Endothelial cell of umbilical vein (primary cell): ENCODE measurements at regions of chr1 and their contacts with region 1.

Region 1: GRCh38 chr1:54052934-54053744 is at the starts of genes TCEANC2 and TMEM59:
- DNase-seq: peak; percentile 99
- H3K4me3 ChIP-seq: peak within 1 kb of the TSS; percentile 81 to 96 (median 91)
- H3K27ac ChIP-seq: peak within 1 kb of the TSS; percentile 64
- H3K4me1 ChIP-seq: peaks cover 11% of the 10 kb centered on the region
- H3K27me3 ChIP-seq: no peaks in the 10 kb centered on the region
- CTCF ChIP-seq: no peak
- POLR2A ChIP-seq: peak; percentile 42
- total RNA-seq, gene TCEANC2: 5.1 and 6.1 TPM in 2 replicates
- total RNA-seq, gene TMEM59: 196 and 198 TPM in 2 replicates

Region 2: GRCh38 chr1:53837924-53838652 is 215.1 kb before region 1 on chr1 and contains the start of gene NDC1:
- CTCF ChIA-PET with region 1: no interaction called
- POLR2A ChIA-PET with region 1: no interaction called
- dilution Hi-C with region 1: no loop called
- intact Hi-C with region 1: loop called (anchors 1 kb)
- DNase-seq: peak; percentile 96
- H3K4me3 ChIP-seq: peak within 1 kb of the TSS; percentile 86 to 97 (median 91)
- H3K27ac ChIP-seq: peak within 1 kb of the TSS; percentile 82
- H3K4me1 ChIP-seq: peaks cover 5% of the 10 kb centered on the region
- H3K27me3 ChIP-seq: no peaks in the 10 kb centered on the region
- CTCF ChIP-seq: peak in 1 of 2 donors; percentile 26
- POLR2A ChIP-seq: no peak
- total RNA-seq, gene NDC1: 29.2 and 30.2 TPM in 2 replicates

Region 3: GRCh38 chr1:53945433-53946251 is 107.5 kb before region 1 on chr1 and contains the start of gene IFT25:
- CTCF ChIA-PET with region 1: no interaction called
- POLR2A ChIA-PET with region 1: no interaction called
- dilution Hi-C with region 1: no loop called
- intact Hi-C with region 1: loop called (anchors 1 kb)
- DNase-seq: peak; percentile 95
- H3K4me3 ChIP-seq: peak within 1 kb of the TSS; percentile 88 to 95 (median 91)
- H3K27ac ChIP-seq: peak within 1 kb of the TSS; percentile 43
- H3K4me1 ChIP-seq: peaks cover 20% of the 10 kb centered on the region
- H3K27me3 ChIP-seq: no peaks in the 10 kb centered on the region
- CTCF ChIP-seq: no peak
- POLR2A ChIP-seq: peak; percentile 77
- total RNA-seq, gene IFT25: 31.4 and 34.0 TPM in 2 replicates

Region 4: GRCh38 chr1:54199765-54200518 is 146.8 kb after region 1 on chr1 and contains the starts of genes CYB5RL and MRPL37:
- CTCF ChIA-PET with region 1: no interaction called
- POLR2A ChIA-PET with region 1: no interaction called
- dilution Hi-C with region 1: no loop called
- intact Hi-C with region 1: loop called (anchors 1 kb)
- DNase-seq: peak; percentile 97
- H3K4me3 ChIP-seq: peak within 1 kb of the TSS; percentile 58 to 67 (median 58)
- H3K27ac ChIP-seq: peak within 1 kb of the TSS; percentile 55
- H3K4me1 ChIP-seq: peaks cover 19% of the 10 kb centered on the region
- H3K27me3 ChIP-seq: no peaks in the 10 kb centered on the region
- CTCF ChIP-seq: no peak
- POLR2A ChIP-seq: peak; percentile 83
- total RNA-seq, gene CYB5RL: 8.6 and 9.6 TPM in 2 replicates
- total RNA-seq, gene MRPL37: 109 TPM in 2 replicates

Region 5: DNA sequence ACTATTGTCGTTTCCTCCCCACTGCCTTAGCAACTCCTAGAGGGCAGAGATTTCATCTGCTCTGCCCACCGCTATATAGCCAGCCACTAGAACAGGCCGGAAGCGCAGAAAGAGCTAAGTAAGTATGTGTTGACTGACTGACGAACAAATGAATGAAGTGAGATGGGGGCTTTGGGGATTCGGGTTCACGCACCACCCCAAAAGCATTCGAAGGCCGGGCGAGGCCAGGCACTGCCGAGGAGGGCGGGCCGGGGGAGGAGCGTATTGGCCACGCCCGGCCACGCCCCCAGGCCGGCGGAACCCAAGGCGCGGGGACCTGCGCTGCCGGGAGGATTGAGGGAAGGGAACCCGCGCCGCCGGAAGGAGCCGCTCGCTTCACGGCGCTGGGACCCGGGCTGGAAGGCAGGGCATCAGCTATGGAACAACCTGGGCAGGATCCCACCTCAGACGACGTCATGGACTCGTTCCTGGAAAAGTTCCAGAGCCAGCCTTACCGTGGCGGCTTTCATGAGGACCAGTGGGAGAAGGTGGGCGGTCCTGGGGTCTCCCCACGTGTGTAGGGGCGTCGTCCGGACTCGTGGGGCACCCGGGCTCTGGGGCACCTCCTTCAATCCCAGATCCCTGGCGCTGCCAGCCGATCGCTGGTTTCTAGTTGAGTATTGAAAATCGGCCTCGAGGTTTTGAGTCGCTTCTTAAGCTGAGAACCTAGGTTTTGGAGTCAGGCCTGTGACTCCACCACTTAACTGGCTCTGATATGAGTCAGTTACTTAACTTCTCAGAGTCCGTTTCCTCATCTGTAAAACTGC is 662.6 kb after region 1 on chr1 and contains the start of gene TTC4:
- CTCF ChIA-PET with region 1: no interaction called
- POLR2A ChIA-PET with region 1: no interaction called
- dilution Hi-C with region 1: no loop called
- intact Hi-C with region 1: loop called (anchors 2 kb)
- DNase-seq: peak; percentile 81
- H3K4me3 ChIP-seq: peak within 1 kb of the TSS; percentile 68 to 98 (median 95)
- H3K27ac ChIP-seq: peak within 1 kb of the TSS; percentile 77
- H3K4me1 ChIP-seq: peaks cover 11% of the 10 kb centered on the region
- H3K27me3 ChIP-seq: peaks cover 0 to 2% of the 10 kb centered on the region in 2 experiments
- CTCF ChIP-seq: no peak
- POLR2A ChIP-seq: peak; percentile 96
- total RNA-seq, gene TTC4: 21.4 and 28.8 TPM in 2 replicates